Left ventricle myocardium superior (tissue), 1 donor: ENCODE measurements at regions of chr15 and their contacts with region 1.

Region 1: GRCh38 chr15:99104788-99105513 is at the start of gene SYNM:
- DNase-seq: peak; percentile 91
- ATAC-seq: peak; percentile 83
- total RNA-seq, gene SYNM: 329 TPM

Region 2: DNA sequence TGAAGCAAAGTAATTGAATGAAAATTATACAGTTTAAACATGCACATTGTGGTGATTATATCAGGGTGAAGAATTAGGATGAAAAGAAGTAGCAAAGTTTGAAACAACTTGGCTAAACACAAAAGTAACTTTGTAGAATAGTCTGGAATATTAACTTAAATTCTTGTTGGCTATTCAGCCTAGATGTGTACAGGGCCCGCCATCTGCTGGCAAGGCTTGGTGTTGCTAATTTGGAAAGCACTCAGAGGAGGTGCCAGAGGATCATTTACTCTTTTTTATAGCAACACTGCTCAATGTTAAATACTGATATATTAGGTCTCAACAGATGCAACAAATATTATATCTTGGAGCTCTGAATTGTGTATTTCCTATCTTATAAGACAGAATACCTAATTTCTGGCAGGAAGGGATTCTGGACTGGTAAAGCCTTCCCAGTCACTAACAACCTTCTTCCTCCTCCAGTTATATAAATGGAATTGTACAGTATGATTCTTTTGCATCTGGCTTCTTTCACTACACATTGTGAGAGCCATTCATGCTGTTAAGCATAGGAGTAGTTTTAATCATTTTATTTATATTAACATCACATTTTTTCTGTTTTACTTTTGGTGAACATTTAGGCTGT is 108.3 kb after region 1 on chr15:
- intact Hi-C with region 1: loop called (anchors 2 kb)
- DNase-seq: peak; percentile 89
- ATAC-seq: peak; percentile 86